Activated CD4-positive, alpha-beta memory T cell treated with anti-CD3 and anti-CD28 coated beads for 36 hours (primary cell): ENCODE measurements at regions of chr11 and their contacts with region 1.

Region 1: DNA sequence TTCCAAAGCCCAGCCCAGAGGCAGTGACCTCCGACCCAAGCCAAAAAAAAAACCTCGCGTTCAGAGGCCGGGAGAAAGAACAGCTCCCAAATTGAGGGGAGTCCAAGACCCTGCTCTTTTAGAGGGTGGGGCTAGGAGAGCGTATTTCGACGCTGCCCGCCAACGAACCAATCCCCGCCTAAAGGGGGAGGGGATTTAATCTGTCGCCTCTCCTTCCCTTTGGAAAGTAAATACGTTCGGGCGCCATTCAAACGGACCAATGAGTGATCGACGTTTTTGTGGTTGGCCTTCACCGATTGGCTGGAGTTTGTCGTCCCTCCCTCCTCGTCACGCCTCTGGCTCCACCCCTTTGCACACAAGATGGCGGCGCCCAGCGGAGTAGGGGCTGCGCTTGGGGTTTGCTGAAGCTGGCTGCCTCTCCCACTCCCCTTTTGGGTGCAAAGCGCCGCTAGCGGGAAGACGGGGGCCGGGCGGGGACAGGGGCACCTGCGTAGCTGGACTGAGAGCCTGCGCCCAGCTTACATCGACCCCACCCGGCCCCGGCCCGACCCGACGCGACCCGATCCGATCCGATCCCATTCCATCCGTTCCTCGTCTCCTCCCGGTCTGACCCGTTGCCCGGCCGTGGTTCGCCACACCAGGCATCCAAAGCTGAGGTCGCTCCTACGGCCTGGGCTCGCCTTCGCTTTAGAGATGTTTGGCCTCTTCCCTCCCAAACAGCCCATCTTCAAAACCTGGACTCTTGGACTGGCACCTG is at the start of gene RNF26:
- DNase-seq: peak; percentile 97
- H3K4me3 Mint-ChIP-seq: peak within 1 kb of the TSS; percentile 93
- H3K27ac Mint-ChIP-seq: peak within 1 kb of the TSS; percentile 85
- H3K4me1 Mint-ChIP-seq: peaks cover 27% of the 10 kb centered on the region
- H3K27me3 Mint-ChIP-seq: peaks cover 10% of the 10 kb centered on the region
- total RNA-seq, gene RNF26: 33.7 to 35.2 TPM

Region 2: GRCh38 chr11:119067371-119068222 is 266.8 kb before region 1 on chr11 and contains the start of gene VPS11:
- CTCF ChIA-PET with region 1: no interaction called
- POLR2A ChIA-PET with region 1: no interaction called
- intact Hi-C with region 1: loop called (anchors 5 kb)
- DNase-seq: peak; percentile 99
- H3K4me3 Mint-ChIP-seq: peak within 1 kb of the TSS; percentile 96
- H3K27ac Mint-ChIP-seq: peak within 1 kb of the TSS; percentile 97
- H3K4me1 Mint-ChIP-seq: peaks cover 38% of the 10 kb centered on the region
- H3K27me3 Mint-ChIP-seq: no peaks in the 10 kb centered on the region
- total RNA-seq, gene VPS11: 19.2 to 21.1 TPM

Region 3: GRCh38 chr11:119205574-119206510 is 128.5 kb before region 1 on chr11 and contains the start of gene CBL:
- CTCF ChIA-PET with region 1: interaction called, 11 read pairs
- POLR2A ChIA-PET with region 1: no interaction called
- intact Hi-C with region 1: no loop called
- DNase-seq: peak; percentile 98
- H3K4me3 Mint-ChIP-seq: peak within 1 kb of the TSS; percentile 91
- H3K27ac Mint-ChIP-seq: peak within 1 kb of the TSS; percentile 85
- H3K4me1 Mint-ChIP-seq: peaks cover 25% of the 10 kb centered on the region
- H3K27me3 Mint-ChIP-seq: no peaks in the 10 kb centered on the region
- total RNA-seq, gene CBL: 30.8 to 31.2 TPM

Region 4: GRCh38 chr11:119315131-119316015 is 19.0 kb before region 1 on chr11:
- CTCF ChIA-PET with region 1: interaction called, 139 read pairs
- POLR2A ChIA-PET with region 1: no interaction called
- intact Hi-C with region 1: loop called (anchors 2 kb)
- DNase-seq: peak; percentile 66
- H3K4me3 Mint-ChIP-seq: peak overlapping the region; percentile 72
- H3K27ac Mint-ChIP-seq: no peak overlapping the region
- H3K4me1 Mint-ChIP-seq: peaks cover 20% of the 10 kb centered on the region
- H3K27me3 Mint-ChIP-seq: peaks cover 15% of the 10 kb centered on the region

Region 5: GRCh38 chr11:119347242-119347641 is 12.9 kb after region 1 on chr11:
- CTCF ChIA-PET with region 1: interaction called, 17 read pairs
- POLR2A ChIA-PET with region 1: no interaction called
- intact Hi-C with region 1: no loop called
- DNase-seq: no peak
- H3K4me3 Mint-ChIP-seq: no peak overlapping the region
- H3K27ac Mint-ChIP-seq: no peak overlapping the region
- H3K4me1 Mint-ChIP-seq: peaks cover 5% of the 10 kb centered on the region
- H3K27me3 Mint-ChIP-seq: peaks cover 15% of the 10 kb centered on the region

Region 6: DNA sequence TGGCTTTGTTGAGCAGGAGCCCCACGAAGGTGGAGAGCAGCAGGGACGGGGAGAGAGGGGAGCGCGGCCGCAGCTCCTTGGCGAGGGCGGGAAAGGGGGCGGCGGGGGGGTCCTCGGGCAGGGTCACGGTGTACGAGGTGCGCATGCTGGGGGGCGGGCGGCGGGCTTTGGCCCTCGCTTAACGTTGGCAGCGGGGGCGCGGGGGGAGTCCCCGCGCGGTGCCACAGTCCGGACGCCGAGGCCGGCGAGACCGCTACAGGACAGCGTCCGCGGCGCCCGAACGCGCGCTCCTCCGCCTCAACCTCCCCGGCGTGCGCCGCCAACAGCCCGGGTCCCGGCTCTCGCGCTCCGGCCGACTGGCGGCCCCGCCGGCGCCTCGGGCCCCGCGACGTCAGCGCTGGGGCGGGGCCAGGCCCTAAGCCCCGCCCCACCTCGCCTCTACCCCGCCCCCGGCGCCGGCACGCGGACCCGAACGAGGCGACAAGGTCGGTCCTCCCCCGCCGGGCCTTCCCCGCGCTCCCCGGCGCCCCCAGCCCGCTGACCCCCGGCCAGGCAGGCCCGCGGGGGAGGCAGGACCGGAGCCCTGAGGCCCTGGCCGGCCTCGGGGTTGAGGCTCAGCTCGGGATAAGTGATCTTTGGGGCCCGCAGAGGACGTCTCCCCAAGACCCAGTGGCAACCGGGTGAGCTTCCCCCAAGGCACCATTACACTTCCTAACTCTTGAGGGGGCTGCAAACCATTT is 29.7 kb after region 1 on chr11:
- CTCF ChIA-PET with region 1: interaction called, 11 read pairs
- POLR2A ChIA-PET with region 1: no interaction called
- intact Hi-C with region 1: loop called (anchors 2 kb)
- DNase-seq: peak; percentile 64
- H3K4me3 Mint-ChIP-seq: no peak overlapping the region
- H3K27ac Mint-ChIP-seq: no peak overlapping the region
- H3K4me1 Mint-ChIP-seq: peaks cover 34% of the 10 kb centered on the region
- H3K27me3 Mint-ChIP-seq: peaks cover 48% of the 10 kb centered on the region

Region 7: GRCh38 chr11:119381181-119381988 is 47.0 kb after region 1 on chr11 and contains the start of gene USP2:
- CTCF ChIA-PET with region 1: interaction called, 45 read pairs
- POLR2A ChIA-PET with region 1: no interaction called
- intact Hi-C with region 1: no loop called
- DNase-seq: peak; percentile 98
- H3K4me3 Mint-ChIP-seq: no peak within 1 kb of the TSS
- H3K27ac Mint-ChIP-seq: peak within 1 kb of the TSS; percentile 2
- H3K4me1 Mint-ChIP-seq: peaks cover 10% of the 10 kb centered on the region
- H3K27me3 Mint-ChIP-seq: no peaks in the 10 kb centered on the region
- total RNA-seq, gene USP2: 1.4 to 2.2 TPM

Region 8: DNA sequence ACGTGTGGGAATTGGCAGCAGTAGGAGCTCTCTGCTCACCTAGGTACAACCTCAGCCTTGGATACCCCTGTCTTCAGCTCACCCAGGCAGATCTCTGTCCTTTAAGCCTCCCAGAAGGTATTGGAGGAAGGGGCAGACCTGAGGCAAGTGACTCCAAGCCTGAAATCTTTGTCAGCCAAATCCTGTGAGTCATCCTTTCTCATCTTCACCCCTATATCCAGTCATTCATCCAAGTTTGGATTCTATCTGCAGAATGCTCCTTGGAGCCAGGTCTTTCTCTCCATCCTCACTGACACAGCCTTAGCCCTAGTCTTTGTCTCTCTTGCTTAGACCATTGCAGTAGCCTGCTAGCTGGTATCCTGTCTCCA is 99.0 kb after region 1 on chr11:
- CTCF ChIA-PET with region 1: no interaction called
- POLR2A ChIA-PET with region 1: no interaction called
- intact Hi-C with region 1: no loop called
- DNase-seq: no peak
- H3K4me3 Mint-ChIP-seq: no peak overlapping the region
- H3K27ac Mint-ChIP-seq: no peak overlapping the region
- H3K4me1 Mint-ChIP-seq: no peaks in the 10 kb centered on the region
- H3K27me3 Mint-ChIP-seq: peaks cover 27% of the 10 kb centered on the region